T-cell (primary cell): ENCODE measurements at regions of chr21 and their contacts with region 1.

Region 1: GRCh38 chr21:42830456-42831455 is 48.6 kb downstream of the WDR4 start:
- DNase-seq: peak in 5 of 35 experiments; percentile 11 to 23 (median 16)
- ATAC-seq: peak in 1 of 4 experiments; percentile 17
- H3K4me3 ChIP-seq: no peak overlapping the region
- H3K4me3 Mint-ChIP-seq: peak overlapping the region in 1 of 3 donors; percentile 79
- H3K27ac ChIP-seq: no peak overlapping the region
- H3K27ac Mint-ChIP-seq: no peak overlapping the region
- H3K4me1 ChIP-seq: peaks cover 19 to 34% of the 10 kb centered on the region in 2 experiments
- H3K4me1 Mint-ChIP-seq: peaks cover 30 to 40% (median 37%) of the 10 kb centered on the region in 3 donors
- H3K27me3 ChIP-seq: peaks cover 0 to 25% of the 10 kb centered on the region in 2 experiments
- H3K27me3 Mint-ChIP-seq: peaks cover 11 to 23% of the 10 kb centered on the region in 2 donors

Region 2: DNA sequence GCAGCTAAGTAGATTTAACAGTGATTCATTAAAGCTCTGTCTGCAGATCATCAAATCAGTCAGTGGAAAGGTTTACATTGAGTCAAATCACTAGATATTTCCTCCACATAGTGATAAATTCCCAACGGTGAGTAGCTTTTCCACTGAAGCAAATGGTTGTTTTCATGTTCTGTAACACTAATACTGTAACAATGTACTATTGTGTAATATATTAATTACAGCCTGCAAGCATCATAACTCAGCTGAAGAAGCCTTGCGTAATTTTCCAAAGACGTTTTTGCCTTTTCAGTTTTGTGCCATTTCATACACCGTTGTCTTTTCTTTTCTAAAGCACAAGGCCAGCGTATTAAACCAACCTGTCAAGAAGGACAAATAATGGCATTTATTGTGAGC is 194.2 kb before region 1 on chr21:
- CTCF ChIA-PET with region 1: no interaction called
- POLR2A ChIA-PET with region 1: no interaction called
- DNase-seq: no peak
- ATAC-seq: no peak
- H3K4me3 ChIP-seq: no peak overlapping the region
- H3K4me3 Mint-ChIP-seq: no peak overlapping the region
- H3K27ac ChIP-seq: no peak overlapping the region
- H3K27ac Mint-ChIP-seq: no peak overlapping the region
- H3K4me1 ChIP-seq: peaks cover 0 to 3% of the 10 kb centered on the region in 2 experiments
- H3K4me1 Mint-ChIP-seq: peaks cover 0 to 1% (median 0%) of the 10 kb centered on the region in 3 donors
- H3K27me3 ChIP-seq: peaks cover 0 to 30% of the 10 kb centered on the region in 2 experiments
- H3K27me3 Mint-ChIP-seq: peaks cover 0 to 1% of the 10 kb centered on the region in 2 donors

Region 3: GRCh38 chr21:42806509-42807140 is 24.1 kb before region 1 on chr21:
- CTCF ChIA-PET with region 1: no interaction called
- POLR2A ChIA-PET with region 1: interaction called in 1 of 2 experiments, 11 read pairs
- DNase-seq: no peak
- ATAC-seq: no peak
- H3K4me3 ChIP-seq: no peak overlapping the region
- H3K4me3 Mint-ChIP-seq: no peak overlapping the region
- H3K27ac ChIP-seq: no peak overlapping the region
- H3K27ac Mint-ChIP-seq: no peak overlapping the region
- H3K4me1 ChIP-seq: no peaks in the 10 kb centered on the region
- H3K4me1 Mint-ChIP-seq: no peaks in the 10 kb centered on the region
- H3K27me3 ChIP-seq: peaks cover 0 to 12% of the 10 kb centered on the region in 2 experiments
- H3K27me3 Mint-ChIP-seq: peaks cover 0 to 6% of the 10 kb centered on the region in 2 donors